ENCODE measurements at regions of chr6 and their contacts with region 1.

Region 1: DNA sequence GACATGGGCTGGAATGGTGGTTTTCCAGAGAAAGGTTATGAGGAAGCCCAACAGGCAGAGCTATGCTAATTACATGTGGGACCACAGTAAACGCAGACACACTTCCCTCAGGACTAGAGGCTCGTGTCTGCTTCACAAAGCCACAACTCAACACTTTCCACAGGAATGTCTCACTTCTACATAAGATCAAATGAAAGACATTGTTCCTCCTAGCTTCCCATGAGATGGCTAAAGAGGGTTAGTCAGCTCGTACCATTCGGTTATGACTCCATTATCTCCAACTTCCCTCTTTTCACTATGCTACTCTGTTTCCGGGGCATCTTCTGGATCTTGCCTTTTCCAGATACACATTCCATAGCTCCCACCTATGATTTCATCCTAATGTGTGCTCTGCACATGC is 29.1 kb upstream of the ZC3H12D start:
- DNase-seq: no peak
- ATAC-seq: no peak
- H3K4me3 ChIP-seq: no peak overlapping the region
- H3K4me3 Mint-ChIP-seq: no peak overlapping the region
- H3K27ac ChIP-seq: no peak overlapping the region
- H3K27ac Mint-ChIP-seq: no peak overlapping the region
- H3K4me1 ChIP-seq: peaks cover 13% of the 10 kb centered on the region
- H3K4me1 Mint-ChIP-seq: peaks cover 29% of the 10 kb centered on the region
- H3K27me3 ChIP-seq: no peaks in the 10 kb centered on the region
- H3K27me3 Mint-ChIP-seq: no peaks in the 10 kb centered on the region
- CTCF ChIP-seq: no peak

Region 2: DNA sequence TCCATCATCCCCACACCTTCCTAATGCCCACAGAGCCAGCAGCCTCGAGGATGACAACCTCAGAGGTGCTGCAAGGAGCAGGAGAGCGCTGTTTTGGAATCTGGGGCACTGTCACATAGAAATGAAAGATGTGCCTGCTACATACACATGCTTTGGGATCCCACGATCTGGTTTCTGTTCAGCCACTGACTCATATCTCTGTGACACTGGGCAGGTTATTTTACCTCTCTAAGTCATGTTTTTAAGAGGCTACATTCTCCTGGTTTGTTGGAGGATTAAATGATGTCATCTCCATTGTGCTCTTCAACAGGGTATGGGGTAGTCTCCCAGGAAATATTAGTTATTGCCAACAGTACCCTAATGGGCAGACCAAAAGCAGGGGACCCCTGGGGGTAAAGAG is 229.0 kb before region 1 on chr6:
- CTCF ChIA-PET with region 1: no interaction called
- POLR2A ChIA-PET with region 1: no interaction called
- intact Hi-C with region 1: no loop called
- DNase-seq: no peak
- ATAC-seq: no peak
- H3K4me3 ChIP-seq: no peak overlapping the region
- H3K4me3 Mint-ChIP-seq: no peak overlapping the region
- H3K27ac ChIP-seq: no peak overlapping the region
- H3K27ac Mint-ChIP-seq: no peak overlapping the region
- H3K4me1 ChIP-seq: no peaks in the 10 kb centered on the region
- H3K4me1 Mint-ChIP-seq: no peaks in the 10 kb centered on the region
- H3K27me3 ChIP-seq: no peaks in the 10 kb centered on the region
- H3K27me3 Mint-ChIP-seq: no peaks in the 10 kb centered on the region
- CTCF ChIP-seq: no peak

Region 3: DNA sequence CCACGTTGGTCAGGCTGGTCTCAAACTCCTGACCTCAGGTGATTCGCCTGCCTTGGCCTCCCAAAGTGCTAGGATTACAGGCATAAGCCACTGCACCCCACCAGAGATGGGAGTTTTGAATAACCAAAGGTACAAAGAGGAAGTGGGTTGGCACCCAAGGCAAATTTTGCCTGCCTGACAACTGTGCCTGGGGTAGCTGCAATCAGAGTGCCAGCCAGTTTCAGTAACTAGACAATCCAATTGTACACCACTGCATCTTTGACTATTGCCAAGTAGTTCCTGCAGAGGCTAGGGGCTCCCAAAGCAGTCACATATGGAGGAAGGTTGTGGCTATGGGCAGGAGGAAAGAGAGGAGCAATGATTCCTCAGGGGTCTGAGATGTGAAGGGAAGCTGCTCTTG is 45.7 kb before region 1 on chr6:
- CTCF ChIA-PET with region 1: interaction called, 22 read pairs
- POLR2A ChIA-PET with region 1: no interaction called
- intact Hi-C with region 1: loop called in 1 of 2 experiments (anchors 10 kb)
- DNase-seq: no peak
- ATAC-seq: no peak
- H3K4me3 ChIP-seq: no peak overlapping the region
- H3K4me3 Mint-ChIP-seq: no peak overlapping the region
- H3K27ac ChIP-seq: no peak overlapping the region
- H3K27ac Mint-ChIP-seq: peak overlapping the region; percentile 30
- H3K4me1 ChIP-seq: peaks cover 26% of the 10 kb centered on the region
- H3K4me1 Mint-ChIP-seq: peaks cover 29% of the 10 kb centered on the region
- H3K27me3 ChIP-seq: no peaks in the 10 kb centered on the region
- H3K27me3 Mint-ChIP-seq: no peaks in the 10 kb centered on the region
- CTCF ChIP-seq: no peak

Region 4: DNA sequence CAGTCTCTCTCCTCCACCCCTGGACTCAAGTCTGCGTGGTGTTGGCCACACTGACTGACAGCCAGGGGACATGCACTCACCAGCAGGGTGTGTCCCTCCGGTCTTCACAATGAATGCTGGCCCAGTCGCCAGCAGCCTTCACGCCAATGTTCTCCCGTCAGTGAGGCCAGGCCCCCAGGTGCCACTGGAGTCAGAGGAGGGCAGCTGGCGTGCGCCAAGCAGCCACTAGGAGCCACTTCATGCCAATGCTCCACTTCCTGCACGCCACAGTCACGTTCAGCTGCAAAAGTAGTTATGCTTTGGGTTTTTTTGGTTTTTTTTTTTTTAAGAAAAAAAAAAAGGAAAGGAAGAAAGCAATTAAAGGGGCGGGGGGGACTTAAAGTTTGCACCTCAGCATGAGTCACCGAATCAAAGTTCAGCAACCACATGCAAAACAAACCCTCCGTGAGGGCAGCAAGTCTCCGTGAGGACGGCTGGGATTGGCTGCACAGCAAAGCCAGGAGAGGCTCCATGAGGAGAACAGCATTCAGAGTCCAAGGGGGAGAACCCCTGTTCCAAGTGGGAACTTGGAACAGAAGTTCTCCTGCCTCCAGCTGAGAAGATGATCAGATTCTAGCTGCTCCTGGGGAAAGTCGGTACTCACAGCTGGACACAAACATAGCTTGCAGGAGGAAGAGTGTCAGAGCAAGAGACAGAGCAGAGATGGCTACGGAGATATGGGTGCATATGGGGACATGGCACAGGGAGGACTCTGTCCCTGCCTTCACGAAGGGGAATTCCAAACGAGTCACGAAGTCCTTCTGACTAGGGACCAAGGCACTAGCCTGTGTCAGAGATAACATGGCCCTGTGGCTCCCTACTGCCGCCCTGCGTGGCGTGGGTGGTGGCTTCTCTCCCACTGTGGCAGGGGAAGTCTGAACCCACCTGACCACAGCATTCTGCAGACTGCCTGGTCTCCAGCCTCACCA is 28.9 kb before region 1 on chr6 and contains the start of gene ZC3H12D:
- CTCF ChIA-PET with region 1: interaction called, 14 read pairs
- POLR2A ChIA-PET with region 1: interaction called, 6 read pairs
- intact Hi-C with region 1: loop called (anchors 1 kb)
- DNase-seq: peak; percentile 65 to 93 (median 82)
- ATAC-seq: peak; percentile 80
- H3K4me3 ChIP-seq: peak within 1 kb of the TSS; percentile 45 to 55
- H3K4me3 Mint-ChIP-seq: peak within 1 kb of the TSS; percentile 86
- H3K27ac ChIP-seq: peak within 1 kb of the TSS; percentile 69 to 92
- H3K27ac Mint-ChIP-seq: peak within 1 kb of the TSS; percentile 95
- H3K4me1 ChIP-seq: peaks cover 43% of the 10 kb centered on the region
- H3K4me1 Mint-ChIP-seq: peaks cover 63% of the 10 kb centered on the region
- H3K27me3 ChIP-seq: no peaks in the 10 kb centered on the region
- H3K27me3 Mint-ChIP-seq: no peaks in the 10 kb centered on the region
- CTCF ChIP-seq: peak; percentile 66
- total RNA-seq, gene ZC3H12D: 45.9 to 50.0 TPM

Region 5: GRCh38 chr6:149499066-149499465 is 14.8 kb before region 1 on chr6:
- CTCF ChIA-PET with region 1: interaction called, 26 read pairs
- POLR2A ChIA-PET with region 1: interaction called, 13 read pairs
- intact Hi-C with region 1: loop called in 1 of 2 experiments (anchors 1 kb)
- DNase-seq: no peak
- ATAC-seq: no peak
- H3K4me3 ChIP-seq: no peak overlapping the region
- H3K4me3 Mint-ChIP-seq: no peak overlapping the region
- H3K27ac ChIP-seq: no peak overlapping the region
- H3K27ac Mint-ChIP-seq: peak overlapping the region; percentile 50
- H3K4me1 ChIP-seq: peaks cover 24% of the 10 kb centered on the region
- H3K4me1 Mint-ChIP-seq: peaks cover 38% of the 10 kb centered on the region
- H3K27me3 ChIP-seq: no peaks in the 10 kb centered on the region
- H3K27me3 Mint-ChIP-seq: no peaks in the 10 kb centered on the region
- CTCF ChIP-seq: no peak

Measured in CD8-positive, alpha-beta T cell (primary cell).